AG04450 (cell line): ENCODE measurements at regions of chr5 and their contacts with region 1.

Region 1: GRCh38 chr5:68287976-68288706 is 72.6 kb downstream of the PIK3R1 start:
- DNase-seq: no peak
- H3K4me3 ChIP-seq: peak overlapping the region; percentile 61
- H3K27ac ChIP-seq: peak overlapping the region; percentile 22
- H3K27me3 ChIP-seq: no peaks in the 10 kb centered on the region
- CTCF ChIP-seq: no peak

Region 2: GRCh38 chr5:67921004-67921601 is 367.0 kb before region 1 on chr5:
- CTCF ChIA-PET with region 1: no interaction called
- POLR2A ChIA-PET with region 1: no interaction called
- DNase-seq: no peak
- H3K4me3 ChIP-seq: no peak overlapping the region
- H3K27ac ChIP-seq: no peak overlapping the region
- H3K27me3 ChIP-seq: no peaks in the 10 kb centered on the region
- CTCF ChIP-seq: no peak

Region 3: GRCh38 chr5:68187268-68188055 is 100.7 kb before region 1 on chr5:
- CTCF ChIA-PET with region 1: no interaction called
- POLR2A ChIA-PET with region 1: no interaction called
- DNase-seq: no peak
- H3K4me3 ChIP-seq: peak overlapping the region; percentile 29
- H3K27ac ChIP-seq: no peak overlapping the region
- H3K27me3 ChIP-seq: no peaks in the 10 kb centered on the region
- CTCF ChIP-seq: no peak

Region 4: GRCh38 chr5:68272289-68272688 is 15.9 kb before region 1 on chr5:
- CTCF ChIA-PET with region 1: interaction called, 26 read pairs
- POLR2A ChIA-PET with region 1: no interaction called
- DNase-seq: no peak
- H3K4me3 ChIP-seq: no peak overlapping the region
- H3K27ac ChIP-seq: no peak overlapping the region
- H3K27me3 ChIP-seq: no peaks in the 10 kb centered on the region
- CTCF ChIP-seq: peak; percentile 40; the same call in 1 of the 2 replicates

Region 5: GRCh38 chr5:68299105-68299504 is 11.0 kb after region 1 on chr5:
- CTCF ChIA-PET with region 1: interaction called, 52 read pairs
- POLR2A ChIA-PET with region 1: no interaction called
- DNase-seq: no peak
- H3K4me3 ChIP-seq: no peak overlapping the region
- H3K27ac ChIP-seq: no peak overlapping the region
- H3K27me3 ChIP-seq: no peaks in the 10 kb centered on the region
- CTCF ChIP-seq: no peak

Region 6: DNA sequence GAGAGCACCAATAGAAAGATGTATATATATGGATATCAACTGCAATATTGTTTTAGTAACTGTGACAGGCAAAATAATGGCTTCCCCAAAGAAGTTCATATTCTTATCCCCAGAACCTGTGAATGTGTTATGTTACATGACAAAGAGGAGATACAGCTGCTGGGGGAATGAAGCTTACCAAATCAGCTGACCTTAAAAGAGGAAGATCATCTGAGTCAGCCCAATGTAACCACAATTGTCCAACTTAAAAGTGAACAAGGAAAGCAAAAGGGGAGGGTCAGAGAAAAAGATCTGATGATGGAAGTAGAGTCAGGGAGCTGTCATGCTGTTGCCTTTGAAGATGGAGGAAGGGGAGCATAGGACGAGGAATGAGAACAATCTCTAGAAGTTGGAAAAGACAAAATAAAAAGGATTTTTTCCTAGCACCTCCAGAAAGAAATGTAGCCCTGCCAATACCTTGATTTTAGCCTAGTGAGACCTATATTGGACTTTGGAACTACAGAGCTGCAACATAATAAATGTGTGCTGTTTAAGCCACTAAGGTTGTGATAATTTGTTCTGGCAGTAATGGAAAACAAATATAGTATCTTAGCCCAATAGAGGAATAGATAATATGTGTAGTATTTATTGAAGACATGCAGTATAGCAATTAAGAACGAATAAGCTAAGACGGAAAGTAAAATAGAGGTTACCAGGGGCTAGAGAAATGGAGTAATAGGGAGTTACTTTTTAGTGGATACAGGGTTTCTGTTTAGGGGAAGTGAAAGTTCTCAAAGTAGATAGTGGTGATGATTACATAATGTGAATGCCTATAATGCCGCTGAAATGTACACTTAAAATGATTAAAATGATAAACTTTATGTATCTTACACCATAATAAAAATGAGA is 43.3 kb after region 1 on chr5:
- CTCF ChIA-PET with region 1: interaction called, 10 read pairs
- POLR2A ChIA-PET with region 1: no interaction called
- DNase-seq: peak; percentile 43
- H3K4me3 ChIP-seq: no peak overlapping the region
- H3K27ac ChIP-seq: no peak overlapping the region
- H3K27me3 ChIP-seq: peaks cover 5% of the 10 kb centered on the region
- CTCF ChIP-seq: no peak

Region 7: DNA sequence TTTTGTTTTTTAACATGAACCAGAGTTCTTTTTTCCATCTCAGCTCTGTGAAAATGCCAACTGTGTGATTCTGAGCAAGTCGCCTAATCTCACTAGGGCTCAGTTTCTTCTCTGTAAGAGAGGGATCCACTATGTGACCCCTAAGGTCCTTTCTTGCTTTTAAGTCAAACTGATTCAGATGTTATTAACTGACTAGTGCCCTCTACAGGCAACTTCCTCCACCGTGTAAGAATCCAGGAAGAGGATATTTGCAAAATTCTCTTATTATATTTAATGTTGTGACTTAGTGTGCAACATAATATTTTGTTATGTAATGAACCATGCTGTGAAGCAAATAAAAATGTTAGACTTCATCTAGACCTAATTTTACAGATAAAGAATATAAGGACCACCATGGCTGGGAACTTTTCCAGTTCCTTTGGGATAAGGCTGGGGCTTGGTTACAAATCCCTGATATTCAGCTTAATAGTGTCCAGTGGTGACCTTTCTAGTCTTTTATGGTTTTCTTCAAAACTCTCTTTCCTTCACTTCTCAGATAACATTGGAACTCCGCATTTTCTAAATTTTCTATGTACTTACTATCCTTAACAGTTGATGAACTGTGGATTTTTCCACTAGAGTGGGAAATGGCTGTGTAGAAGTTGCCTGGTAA is 172.1 kb after region 1 on chr5:
- CTCF ChIA-PET with region 1: interaction called, 46 read pairs
- POLR2A ChIA-PET with region 1: no interaction called
- DNase-seq: no peak
- H3K4me3 ChIP-seq: no peak overlapping the region
- H3K27ac ChIP-seq: no peak overlapping the region
- H3K27me3 ChIP-seq: no peaks in the 10 kb centered on the region
- CTCF ChIP-seq: peak; percentile 72

Region 8: GRCh38 chr5:68661237-68661636 is 373.1 kb after region 1 on chr5:
- CTCF ChIA-PET with region 1: interaction called, 12 read pairs
- POLR2A ChIA-PET with region 1: no interaction called
- DNase-seq: no peak
- H3K4me3 ChIP-seq: no peak overlapping the region
- H3K27ac ChIP-seq: no peak overlapping the region
- H3K27me3 ChIP-seq: no peaks in the 10 kb centered on the region
- CTCF ChIP-seq: peak; percentile 51

Region 9: DNA sequence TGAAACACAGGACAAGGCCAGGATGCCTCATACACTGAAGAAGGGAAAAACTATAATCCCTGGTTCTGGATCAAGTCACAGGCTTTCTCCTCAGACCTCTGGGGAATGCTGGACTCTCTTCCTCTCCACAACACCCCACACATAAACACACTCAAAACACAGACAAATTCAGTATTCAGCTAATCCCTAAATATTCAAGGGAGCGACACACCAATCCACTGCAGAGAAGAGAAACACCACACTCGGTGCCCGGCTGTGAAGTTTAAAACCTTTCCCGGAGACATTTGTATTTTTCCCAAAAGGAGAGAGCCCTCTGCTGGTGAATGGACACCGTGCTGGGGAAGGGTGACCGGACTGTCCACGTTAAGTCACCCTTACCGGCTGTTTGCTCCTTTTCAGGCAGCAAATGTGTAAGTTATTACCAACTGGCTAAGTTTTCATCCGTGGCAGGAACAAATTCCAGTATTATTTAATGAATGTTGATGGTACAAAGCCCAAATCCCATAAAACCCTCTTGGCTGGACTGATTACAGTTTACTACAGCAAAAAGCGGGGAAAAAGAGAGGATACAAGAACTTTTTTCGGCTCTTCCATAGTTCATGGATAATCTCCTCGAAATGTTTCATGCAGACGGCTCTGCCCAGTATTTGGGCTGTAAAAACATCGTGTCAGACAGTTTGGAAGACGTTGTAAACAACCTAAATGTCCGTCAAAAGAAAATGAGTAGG is 674.8 kb after region 1 on chr5:
- CTCF ChIA-PET with region 1: interaction called, 25 read pairs
- POLR2A ChIA-PET with region 1: interaction called, 3 read pairs
- DNase-seq: peak; percentile 3
- H3K4me3 ChIP-seq: no peak overlapping the region
- H3K27ac ChIP-seq: no peak overlapping the region
- H3K27me3 ChIP-seq: no peaks in the 10 kb centered on the region
- CTCF ChIP-seq: peak; percentile 91